PC-9 (cell line): ENCODE measurements at regions of chr12 and their contacts with region 1.

Region 1: GRCh38 chr12:31369712-31370521 is 44.0 kb upstream of the SINHCAF start:
- DNase-seq: peak; percentile 83 to 84
- H3K4me3 ChIP-seq: peak overlapping the region; percentile 49; the same call in 1 of the 2 replicates
- H3K27ac ChIP-seq: peak overlapping the region; percentile 78
- H3K4me1 ChIP-seq: peaks cover 31% of the 10 kb centered on the region
- H3K27me3 ChIP-seq: no peaks in the 10 kb centered on the region
- CTCF ChIP-seq: no peak

Region 2: GRCh38 chr12:31339831-31340622 is 29.9 kb before region 1 on chr12:
- CTCF ChIA-PET with region 1: no interaction called
- POLR2A ChIA-PET with region 1: interaction called, 7 read pairs
- intact Hi-C with region 1: loop called (anchors 1 kb)
- DNase-seq: peak; percentile 60 to 70
- H3K4me3 ChIP-seq: no peak overlapping the region; the same call in 1 of the 2 replicates
- H3K27ac ChIP-seq: peak overlapping the region; percentile 25; the same call in 1 of the 2 replicates
- H3K4me1 ChIP-seq: peaks cover 15% of the 10 kb centered on the region
- H3K27me3 ChIP-seq: no peaks in the 10 kb centered on the region
- CTCF ChIP-seq: no peak

Region 3: DNA sequence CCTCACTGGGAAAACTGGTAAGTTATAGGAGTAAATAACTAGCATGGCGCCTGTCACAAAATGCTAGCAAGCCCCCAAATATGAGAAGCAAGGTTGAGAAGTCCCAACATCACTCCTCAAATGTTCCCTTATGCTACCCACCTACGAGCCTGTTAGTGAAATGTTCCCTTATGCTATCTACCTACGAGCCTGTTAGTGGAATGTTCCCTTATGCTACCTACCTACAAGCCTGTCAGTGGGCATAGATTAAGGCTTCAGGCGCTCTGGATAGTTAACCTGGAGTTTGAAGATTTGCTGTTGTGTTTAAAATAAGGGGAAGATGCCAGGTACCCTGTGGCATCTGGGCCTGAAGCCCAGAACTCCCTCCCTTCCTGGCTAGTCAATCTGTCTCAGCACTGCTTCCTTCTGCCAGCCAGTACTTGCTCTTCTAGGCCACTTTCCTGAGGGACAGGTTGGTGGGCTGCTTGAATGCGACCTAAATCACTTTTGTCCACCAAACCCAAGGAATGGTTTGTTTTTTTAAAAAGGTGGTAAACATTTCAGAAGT is 23.2 kb after region 1 on chr12:
- CTCF ChIA-PET with region 1: no interaction called
- POLR2A ChIA-PET with region 1: no interaction called
- intact Hi-C with region 1: no loop called
- DNase-seq: no peak
- H3K4me3 ChIP-seq: no peak overlapping the region
- H3K27ac ChIP-seq: no peak overlapping the region
- H3K4me1 ChIP-seq: no peaks in the 10 kb centered on the region
- H3K27me3 ChIP-seq: no peaks in the 10 kb centered on the region
- CTCF ChIP-seq: no peak

Region 4: DNA sequence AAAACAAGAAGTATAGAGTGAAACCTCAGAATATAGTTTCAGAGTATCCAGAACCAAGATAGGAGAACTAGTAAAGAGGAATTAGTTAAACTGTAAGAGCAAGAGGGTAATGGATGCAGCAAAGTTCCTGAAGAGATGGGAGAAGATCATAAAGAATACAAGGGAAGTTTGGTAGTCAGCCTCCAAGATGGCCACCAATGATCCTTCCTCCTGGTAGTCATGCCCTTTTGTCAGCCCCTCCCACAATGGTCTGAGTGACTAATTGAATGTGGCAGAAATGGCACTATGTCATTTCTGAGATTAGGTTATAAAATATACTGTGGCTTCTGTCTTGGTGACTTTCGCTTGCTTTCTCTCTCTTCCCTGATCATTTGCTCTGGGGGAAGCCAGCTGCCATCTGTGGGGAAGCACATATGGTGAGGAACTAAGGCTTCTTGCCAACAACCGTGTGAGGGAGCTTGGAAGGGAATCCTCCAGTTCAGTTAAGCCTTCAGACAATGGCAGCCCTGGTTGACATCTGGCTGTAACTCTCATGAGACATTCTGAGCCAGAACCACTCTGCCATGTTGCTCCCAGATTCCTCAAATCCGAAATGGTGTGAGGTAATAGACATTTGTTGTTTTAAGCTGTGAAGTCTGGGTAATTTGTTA is 414.2 kb after region 1 on chr12:
- CTCF ChIA-PET with region 1: no interaction called
- POLR2A ChIA-PET with region 1: no interaction called
- intact Hi-C with region 1: no loop called
- DNase-seq: no peak
- H3K4me3 ChIP-seq: no peak overlapping the region
- H3K27ac ChIP-seq: no peak overlapping the region
- H3K4me1 ChIP-seq: no peaks in the 10 kb centered on the region
- H3K27me3 ChIP-seq: no peaks in the 10 kb centered on the region
- CTCF ChIP-seq: no peak

Region 5: DNA sequence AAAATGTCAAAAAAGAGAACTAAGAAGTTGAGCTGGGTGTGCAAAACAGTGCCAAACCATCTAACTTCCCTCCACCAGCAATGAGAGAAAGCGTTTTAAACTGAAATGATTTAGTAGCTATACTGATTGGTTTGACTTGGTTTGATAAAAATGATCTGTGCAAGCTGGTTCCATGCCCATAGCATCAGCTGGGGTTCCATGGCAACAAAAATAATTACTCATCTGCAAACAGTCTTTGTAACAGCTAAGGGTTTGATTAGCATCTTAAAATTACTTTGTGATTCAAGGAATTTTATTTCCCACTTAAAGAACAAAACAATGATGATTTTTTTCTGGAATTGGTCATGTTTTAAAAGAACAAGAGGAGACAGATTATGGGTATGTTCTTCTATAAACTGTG is 721.8 kb after region 1 on chr12:
- CTCF ChIA-PET with region 1: no interaction called
- POLR2A ChIA-PET with region 1: interaction called, 11 read pairs
- intact Hi-C with region 1: no loop called
- DNase-seq: no peak
- H3K4me3 ChIP-seq: no peak overlapping the region
- H3K27ac ChIP-seq: no peak overlapping the region
- H3K4me1 ChIP-seq: peaks cover 12% of the 10 kb centered on the region
- H3K27me3 ChIP-seq: no peaks in the 10 kb centered on the region
- CTCF ChIP-seq: no peak

Region 6: GRCh38 chr12:32106517-32107358 is 736.8 kb after region 1 on chr12 and contains the start of gene BICD1:
- CTCF ChIA-PET with region 1: no interaction called
- POLR2A ChIA-PET with region 1: no interaction called
- intact Hi-C with region 1: loop called (anchors 5 kb)
- DNase-seq: peak; percentile 63 to 93
- H3K4me3 ChIP-seq: peak within 1 kb of the TSS; percentile 93
- H3K27ac ChIP-seq: peak within 1 kb of the TSS; percentile 71
- H3K4me1 ChIP-seq: peaks cover 27% of the 10 kb centered on the region
- H3K27me3 ChIP-seq: no peaks in the 10 kb centered on the region
- CTCF ChIP-seq: peak; percentile 12; the same call in 1 of the 2 replicates
- total RNA-seq, gene BICD1: 41.1 and 41.3 TPM in 2 replicates

Region 7: GRCh38 chr12:32437095-32437515 is 1067.2 kb after region 1 on chr12:
- CTCF ChIA-PET with region 1: no interaction called
- POLR2A ChIA-PET with region 1: no interaction called
- intact Hi-C with region 1: loop called (anchors 5 kb)
- DNase-seq: peak; percentile 76 to 97
- H3K4me3 ChIP-seq: peak overlapping the region; percentile 28; the same call in 1 of the 2 replicates
- H3K27ac ChIP-seq: peak overlapping the region; percentile 81
- H3K4me1 ChIP-seq: peaks cover 41% of the 10 kb centered on the region
- H3K27me3 ChIP-seq: no peaks in the 10 kb centered on the region
- CTCF ChIP-seq: no peak